ENCODE measurements at regions of chr4 and their contacts with region 1.

Region 1: DNA sequence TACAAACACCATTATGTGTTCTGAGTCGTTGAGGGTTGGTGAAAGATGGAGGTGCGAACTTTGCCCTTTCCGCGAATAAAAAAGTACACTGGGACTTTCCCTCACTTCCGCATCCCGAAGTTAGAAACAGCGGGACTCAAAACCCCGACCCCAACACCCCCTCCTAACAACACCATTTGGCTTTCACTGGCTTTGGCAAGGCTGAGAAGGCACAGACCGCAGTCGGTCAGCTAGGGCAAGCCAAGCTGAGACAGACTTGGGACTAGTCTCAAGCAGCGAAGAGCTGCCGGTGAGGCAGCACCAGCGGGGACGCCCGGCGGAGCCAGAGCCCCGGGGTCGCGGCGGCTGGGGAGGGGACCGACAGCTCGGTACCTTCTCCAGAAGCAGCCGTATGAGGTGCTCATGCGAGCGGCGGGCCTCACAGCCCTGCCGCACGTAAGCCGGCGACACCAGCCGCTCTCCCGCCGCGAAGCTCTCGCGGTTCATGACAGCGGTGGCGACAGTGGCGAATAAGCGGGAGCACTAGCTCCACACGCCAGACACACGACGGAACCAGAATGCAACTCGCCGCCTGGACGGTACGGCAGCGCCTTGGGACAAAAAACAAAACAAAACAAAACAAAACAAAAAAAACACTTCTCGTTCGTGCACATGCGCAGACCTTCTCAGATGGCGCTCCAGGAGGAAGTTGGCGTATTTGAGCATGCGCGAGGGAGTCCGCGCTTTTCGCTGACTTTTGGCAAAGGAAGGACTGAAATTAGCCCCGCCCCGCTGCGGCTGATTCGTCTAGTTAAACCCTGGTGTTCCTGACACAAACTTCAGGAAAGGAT is at the start of gene SEPSECS:
- DNase-seq: peak; percentile 99
- H3K4me3 ChIP-seq: peak within 1 kb of the TSS; percentile 39 to 94 (median 84)
- H3K27ac ChIP-seq: peak within 1 kb of the TSS; percentile 81
- H3K4me1 ChIP-seq: peaks cover 7% of the 10 kb centered on the region
- H3K27me3 ChIP-seq: no peaks in the 10 kb centered on the region
- CTCF ChIP-seq: no peak
- POLR2A ChIP-seq: peak; percentile 87
- total RNA-seq, gene SEPSECS: 5.8 and 8.3 TPM in 2 replicates

Region 2: DNA sequence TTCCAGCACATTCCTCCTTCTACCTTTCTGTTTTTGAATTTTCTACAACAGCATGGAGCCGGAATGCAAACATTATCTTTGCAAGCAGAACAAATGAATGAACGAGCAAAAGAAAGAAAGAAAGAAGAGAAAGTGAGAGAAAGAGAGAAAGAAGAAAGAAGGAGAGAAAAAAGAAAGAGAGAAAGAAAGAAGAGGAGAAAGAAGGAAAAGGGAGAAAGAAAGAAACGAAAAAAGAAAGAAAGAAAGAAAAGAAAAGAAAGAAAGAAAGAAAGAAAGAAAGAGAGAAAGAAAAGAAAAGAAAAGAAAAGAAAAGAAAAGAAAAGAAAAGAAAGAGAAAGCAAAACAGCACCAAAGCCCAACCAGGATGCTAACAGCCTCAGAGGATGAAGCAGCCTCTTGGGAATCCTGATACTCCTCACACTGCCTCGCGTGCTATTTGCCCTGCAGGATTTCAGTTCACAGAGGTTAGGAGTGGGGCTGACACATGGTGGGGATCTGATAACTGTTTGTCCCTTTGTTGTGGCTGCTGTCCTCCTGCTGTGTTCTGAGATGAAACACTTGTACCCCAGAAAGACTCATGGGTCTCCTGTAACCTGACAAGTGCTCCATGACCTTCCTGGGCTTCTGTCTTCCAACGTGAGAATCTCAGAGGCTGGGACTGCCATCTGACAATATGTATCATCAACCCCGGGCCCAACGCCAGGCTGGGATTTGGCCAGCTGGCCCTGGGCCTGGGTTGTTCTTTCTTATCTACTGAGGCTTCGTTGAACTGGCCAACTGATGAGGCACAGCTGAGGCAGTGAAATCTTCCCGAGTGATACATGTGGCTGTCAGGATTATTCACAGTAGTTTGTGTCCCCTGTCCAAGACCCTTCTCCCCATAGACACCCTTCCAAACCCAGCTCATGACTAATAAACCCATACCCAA is 60.9 kb before region 1 on chr4:
- CTCF ChIA-PET with region 1: no interaction called
- POLR2A ChIA-PET with region 1: no interaction called
- dilution Hi-C with region 1: no loop called
- intact Hi-C with region 1: no loop called
- DNase-seq: peak; percentile 9
- H3K4me3 ChIP-seq: no peak overlapping the region
- H3K27ac ChIP-seq: no peak overlapping the region
- H3K4me1 ChIP-seq: no peaks in the 10 kb centered on the region
- H3K27me3 ChIP-seq: no peaks in the 10 kb centered on the region
- CTCF ChIP-seq: no peak
- POLR2A ChIP-seq: no peak

Region 3: DNA sequence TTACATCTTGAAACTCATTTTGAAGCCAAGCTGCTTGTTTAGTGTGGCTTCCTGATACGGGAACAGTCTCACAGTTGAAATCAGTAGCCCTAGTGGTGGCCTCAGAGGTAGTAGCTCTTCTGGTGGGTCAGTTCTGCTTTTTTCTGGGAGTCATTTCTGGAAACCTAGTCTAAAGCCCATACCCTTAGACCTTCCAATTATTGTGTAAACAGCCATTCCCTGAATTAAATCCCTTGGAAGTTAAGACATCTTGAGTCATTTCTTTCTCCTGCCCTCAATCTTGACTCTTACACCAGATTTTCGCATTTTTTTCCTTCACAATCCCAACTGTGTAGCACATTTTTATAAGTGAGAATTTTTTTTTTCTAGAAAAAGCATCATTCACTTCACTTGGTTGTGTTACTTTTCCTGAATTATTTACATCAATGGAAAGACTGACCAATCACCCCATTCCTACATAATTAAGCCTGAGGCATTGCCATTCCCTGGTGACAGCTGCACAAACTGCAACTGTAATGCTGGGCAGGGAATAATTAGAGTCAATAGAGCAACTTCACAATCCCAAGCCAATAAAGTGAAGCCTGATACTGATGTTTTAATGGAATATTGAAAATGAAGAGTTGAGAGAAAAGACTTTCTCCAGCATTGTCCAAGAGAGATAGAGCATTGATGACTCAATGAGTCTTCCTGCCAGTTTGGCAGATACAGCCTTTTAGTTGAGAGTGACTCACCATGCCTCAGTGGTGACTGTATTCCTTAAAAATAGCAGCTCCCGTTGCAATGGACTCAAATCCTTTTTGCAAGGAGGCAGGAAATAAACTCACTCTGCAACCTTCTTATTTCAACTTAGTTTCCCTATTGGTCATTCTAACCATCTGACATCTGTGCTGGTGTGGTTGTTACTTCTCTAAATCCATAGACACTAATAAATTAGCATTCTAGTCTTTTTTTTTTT is 13.1 kb after region 1 on chr4:
- CTCF ChIA-PET with region 1: interaction called, 9 read pairs
- POLR2A ChIA-PET with region 1: interaction called, 4 read pairs
- dilution Hi-C with region 1: no loop called
- intact Hi-C with region 1: loop called (anchors 1 kb)
- DNase-seq: peak; percentile 91
- H3K4me3 ChIP-seq: no peak overlapping the region
- H3K27ac ChIP-seq: peak overlapping the region; percentile 41
- H3K4me1 ChIP-seq: peaks cover 16% of the 10 kb centered on the region
- H3K27me3 ChIP-seq: no peaks in the 10 kb centered on the region
- CTCF ChIP-seq: no peak
- POLR2A ChIP-seq: no peak

Region 4: GRCh38 chr4:25667931-25668557 is 507.9 kb after region 1 on chr4:
- CTCF ChIA-PET with region 1: no interaction called
- POLR2A ChIA-PET with region 1: no interaction called
- dilution Hi-C with region 1: no loop called
- intact Hi-C with region 1: no loop called
- DNase-seq: no peak
- H3K4me3 ChIP-seq: no peak overlapping the region
- H3K27ac ChIP-seq: no peak overlapping the region
- H3K4me1 ChIP-seq: no peaks in the 10 kb centered on the region
- H3K27me3 ChIP-seq: peaks cover 2% of the 10 kb centered on the region in 2 experiments
- CTCF ChIP-seq: no peak
- POLR2A ChIP-seq: no peak